ENCODE measurements at regions of chr9 and their contacts with region 1.

Region 1: GRCh38 chr9:74773886-74774479 is 113.7 kb downstream of the TRPM6 start:
- DNase-seq: peak; percentile 23
- ATAC-seq: peak; percentile 72
- H3K4me3 ChIP-seq: no peak overlapping the region
- H3K27ac ChIP-seq: no peak overlapping the region
- H3K4me1 ChIP-seq: peaks cover 5% of the 10 kb centered on the region
- H3K27me3 ChIP-seq: no peaks in the 10 kb centered on the region; a peak in 1 of 4 replicates
- CTCF ChIP-seq: peak; percentile 81 to 89 (median 87); a peak in 5 of 6 replicates
- EP300 ChIP-seq: no peak
- POLR2A ChIP-seq: no peak
- RAD21 ChIP-seq: peak; percentile 82

Region 2: GRCh38 chr9:74940600-74940999 is 166.6 kb after region 1 on chr9:
- CTCF ChIA-PET with region 1: interaction called, 5 read pairs
- POLR2A ChIA-PET with region 1: no interaction called
- RAD21 ChIA-PET with region 1: no interaction called
- SMC1A ChIA-PET with region 1: no interaction called
- in situ Hi-C with region 1: no loop called
- intact Hi-C with region 1: loop called (anchors 2 kb)
- DNase-seq: no peak
- ATAC-seq: peak; percentile 84
- H3K4me3 ChIP-seq: no peak overlapping the region
- H3K27ac ChIP-seq: no peak overlapping the region
- H3K4me1 ChIP-seq: no peaks in the 10 kb centered on the region
- H3K27me3 ChIP-seq: no peaks in the 10 kb centered on the region
- CTCF ChIP-seq: peak in 2 of 3 experiments; percentile 6 to 34; a peak in 1 of 6 replicates
- EP300 ChIP-seq: no peak
- POLR2A ChIP-seq: no peak
- RAD21 ChIP-seq: no peak

Region 3: DNA sequence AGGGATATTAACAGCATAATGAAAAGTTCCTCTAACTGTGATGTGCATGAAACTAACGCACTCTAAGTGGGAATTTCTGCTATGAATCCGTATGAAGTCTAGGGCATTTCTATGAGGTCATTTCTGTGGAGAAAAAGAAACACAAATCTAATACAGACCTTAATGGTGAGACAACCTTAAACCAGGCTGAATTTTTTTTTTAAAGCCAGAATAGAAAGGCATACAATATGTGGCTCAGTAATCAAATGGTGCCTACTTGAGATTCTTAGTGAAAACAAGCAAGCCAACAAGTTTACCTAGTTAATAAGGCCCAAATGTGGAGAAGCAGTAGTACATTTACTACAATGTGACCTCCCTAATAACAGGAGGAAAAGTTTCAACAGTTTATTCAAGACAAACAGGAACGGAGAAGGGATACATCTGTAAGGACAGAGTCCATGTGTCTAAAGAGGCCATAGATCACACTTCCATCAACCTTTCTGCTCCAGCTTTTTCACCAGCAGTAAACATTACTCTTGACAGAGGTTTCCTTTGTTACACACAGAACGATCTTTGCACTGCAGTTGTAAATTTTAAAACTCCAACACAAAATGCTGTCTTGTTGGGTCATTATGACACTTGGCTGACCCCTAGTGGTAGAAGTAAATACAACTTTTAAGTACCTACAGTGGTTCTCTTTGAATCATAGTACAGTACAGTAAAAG is 227.9 kb after region 1 on chr9:
- CTCF ChIA-PET with region 1: interaction called, 320 read pairs
- POLR2A ChIA-PET with region 1: no interaction called
- RAD21 ChIA-PET with region 1: interaction called, 9 read pairs
- SMC1A ChIA-PET with region 1: interaction called, 127 read pairs
- in situ Hi-C with region 1: loop called (anchors 5 kb)
- intact Hi-C with region 1: loop called (anchors 1 kb)
- DNase-seq: peak; percentile 36
- ATAC-seq: peak; percentile 96
- H3K4me3 ChIP-seq: no peak overlapping the region
- H3K27ac ChIP-seq: no peak overlapping the region
- H3K4me1 ChIP-seq: peaks cover 8% of the 10 kb centered on the region
- H3K27me3 ChIP-seq: no peaks in the 10 kb centered on the region
- CTCF ChIP-seq: peak; percentile 63 to 81 (median 69)
- EP300 ChIP-seq: no peak
- POLR2A ChIP-seq: no peak
- RAD21 ChIP-seq: peak; percentile 87

Region 4: GRCh38 chr9:75071530-75072124 is 297.6 kb after region 1 on chr9:
- CTCF ChIA-PET with region 1: interaction called, 113 read pairs
- POLR2A ChIA-PET with region 1: no interaction called
- RAD21 ChIA-PET with region 1: interaction called, 24 read pairs
- SMC1A ChIA-PET with region 1: interaction called, 25 read pairs
- in situ Hi-C with region 1: loop called (anchors 5 kb)
- intact Hi-C with region 1: no loop called
- DNase-seq: no peak
- ATAC-seq: peak; percentile 63
- H3K4me3 ChIP-seq: no peak overlapping the region
- H3K27ac ChIP-seq: no peak overlapping the region
- H3K4me1 ChIP-seq: no peaks in the 10 kb centered on the region; the same call in 1 of the 2 replicates
- H3K27me3 ChIP-seq: no peaks in the 10 kb centered on the region
- CTCF ChIP-seq: no peak
- EP300 ChIP-seq: no peak
- POLR2A ChIP-seq: no peak
- RAD21 ChIP-seq: no peak

Region 5: GRCh38 chr9:75088260-75088905 is 314.4 kb after region 1 on chr9 and contains the start of gene OSTF1:
- CTCF ChIA-PET with region 1: interaction called, 30 read pairs
- POLR2A ChIA-PET with region 1: no interaction called
- RAD21 ChIA-PET with region 1: interaction called, 6 read pairs
- SMC1A ChIA-PET with region 1: interaction called, 11 read pairs
- in situ Hi-C with region 1: no loop called
- intact Hi-C with region 1: no loop called
- DNase-seq: peak; percentile 64
- ATAC-seq: peak; percentile 89
- H3K4me3 ChIP-seq: peak within 1 kb of the TSS; percentile 93
- H3K27ac ChIP-seq: peak within 1 kb of the TSS; percentile 93
- H3K4me1 ChIP-seq: peaks cover 13% of the 10 kb centered on the region; the same call in 1 of the 2 replicates
- H3K27me3 ChIP-seq: no peaks in the 10 kb centered on the region
- CTCF ChIP-seq: no peak
- EP300 ChIP-seq: no peak
- POLR2A ChIP-seq: peak; percentile 95
- RAD21 ChIP-seq: no peak
- polyA plus RNA-seq, gene OSTF1: 36.2 to 45.3 TPM

Region 6: DNA sequence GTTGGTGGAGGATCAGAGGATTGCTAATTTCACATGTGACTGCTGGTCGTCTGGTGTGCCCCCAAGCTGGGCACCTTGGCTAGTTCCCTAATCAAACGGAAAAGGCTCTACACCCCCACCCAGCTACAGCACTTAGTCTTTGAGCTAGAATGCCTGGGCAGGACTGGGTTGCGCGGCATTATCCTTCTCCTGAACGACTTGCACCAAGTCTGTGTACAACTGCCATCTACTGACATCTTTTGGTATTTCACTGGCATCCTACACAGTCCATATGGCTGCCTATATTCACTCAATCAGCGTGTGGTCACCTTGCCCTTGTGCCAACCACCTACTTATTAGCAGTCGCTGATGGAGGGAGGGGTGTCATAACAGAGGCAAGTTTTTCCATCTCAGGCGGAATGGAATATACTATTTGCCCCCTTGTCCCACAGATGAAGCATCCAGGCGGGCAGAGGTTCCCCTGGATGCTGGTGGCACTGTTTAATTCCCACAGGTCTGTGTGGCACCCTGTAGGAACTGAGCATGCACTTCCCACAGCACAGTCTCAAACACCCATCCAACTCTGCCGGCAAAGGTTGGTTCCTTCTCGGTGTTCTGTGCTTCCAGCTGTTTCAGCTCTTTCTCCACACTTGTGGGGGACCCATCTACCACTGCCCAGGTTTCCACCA is 464.5 kb after region 1 on chr9:
- CTCF ChIA-PET with region 1: interaction called, 4 read pairs
- POLR2A ChIA-PET with region 1: no interaction called
- RAD21 ChIA-PET with region 1: no interaction called
- SMC1A ChIA-PET with region 1: no interaction called
- in situ Hi-C with region 1: no loop called
- intact Hi-C with region 1: loop called (anchors 5 kb)
- DNase-seq: peak; percentile 3
- ATAC-seq: peak; percentile 99
- H3K4me3 ChIP-seq: no peak overlapping the region
- H3K27ac ChIP-seq: no peak overlapping the region
- H3K4me1 ChIP-seq: no peaks in the 10 kb centered on the region
- H3K27me3 ChIP-seq: no peaks in the 10 kb centered on the region
- CTCF ChIP-seq: peak; percentile 54 to 66 (median 62)
- EP300 ChIP-seq: no peak
- POLR2A ChIP-seq: no peak
- RAD21 ChIP-seq: peak; percentile 62